ENCODE measurements at regions of chr6 and their contacts with region 1.

Region 1: DNA sequence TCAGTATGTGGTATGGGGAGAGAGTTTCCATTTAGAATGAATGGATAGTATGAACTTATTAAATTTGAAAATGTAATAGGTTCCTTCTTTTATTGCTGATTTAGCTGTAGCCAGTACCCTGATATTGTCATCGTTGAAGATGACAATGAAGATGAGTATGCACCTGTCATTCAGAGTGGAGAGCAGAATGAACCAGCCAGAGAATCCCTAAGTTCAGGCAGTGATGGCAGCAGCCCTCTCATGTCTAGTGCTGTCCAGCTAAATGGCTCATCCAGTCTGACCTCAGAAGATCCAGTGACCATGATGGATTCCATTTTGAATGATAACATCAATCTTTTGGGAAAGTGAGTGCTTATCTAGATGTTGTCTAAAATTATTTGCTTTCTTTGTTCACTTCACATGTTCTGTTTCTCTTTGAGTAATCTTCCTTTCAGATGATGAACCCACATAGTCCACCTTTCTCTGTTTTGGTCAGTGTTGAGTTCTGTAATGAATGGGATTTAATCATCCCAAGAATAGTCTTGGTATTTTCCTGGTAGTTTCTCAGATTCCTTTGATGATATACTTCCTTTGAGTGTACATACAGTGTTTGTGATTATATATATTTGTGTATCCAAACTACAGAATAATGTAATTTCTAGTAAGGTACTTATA is 23.3 kb downstream of the HSF2 start:
- DNase-seq: no peak
- H3K4me3 Mint-ChIP-seq: no peak overlapping the region
- H3K27ac Mint-ChIP-seq: no peak overlapping the region
- H3K4me1 Mint-ChIP-seq: peaks cover 7% of the 10 kb centered on the region
- H3K27me3 Mint-ChIP-seq: no peaks in the 10 kb centered on the region

Region 2: GRCh38 chr6:122393351-122393896 is 29.3 kb before region 1 on chr6:
- CTCF ChIA-PET with region 1: no interaction called
- POLR2A ChIA-PET with region 1: no interaction called
- intact Hi-C with region 1: loop called (anchors 1 kb)
- DNase-seq: peak; percentile 28
- H3K4me3 Mint-ChIP-seq: no peak overlapping the region
- H3K27ac Mint-ChIP-seq: peak overlapping the region; percentile 64
- H3K4me1 Mint-ChIP-seq: peaks cover 15% of the 10 kb centered on the region
- H3K27me3 Mint-ChIP-seq: peaks cover 3% of the 10 kb centered on the region

Region 3: DNA sequence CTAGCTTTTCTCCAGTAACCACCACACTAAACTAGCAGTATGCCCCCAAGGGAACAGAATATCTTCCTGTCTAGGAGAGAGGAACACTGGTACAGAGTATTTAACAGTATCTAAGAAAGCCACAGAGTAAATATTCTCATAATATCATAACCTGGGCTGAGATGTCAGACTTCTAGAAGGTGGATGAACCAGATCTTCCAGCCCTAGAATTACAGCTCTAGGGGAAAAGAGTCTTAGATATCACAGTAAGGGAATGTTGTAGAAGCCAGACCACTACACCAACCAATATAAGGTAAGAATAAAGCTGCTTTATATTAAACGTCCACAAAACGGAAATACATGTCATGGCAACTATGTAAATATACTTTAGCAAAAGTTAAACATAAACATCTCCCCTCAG is 36.5 kb after region 1 on chr6:
- CTCF ChIA-PET with region 1: no interaction called
- POLR2A ChIA-PET with region 1: no interaction called
- intact Hi-C with region 1: no loop called
- DNase-seq: no peak
- H3K4me3 Mint-ChIP-seq: no peak overlapping the region
- H3K27ac Mint-ChIP-seq: peak overlapping the region; percentile 59
- H3K4me1 Mint-ChIP-seq: peaks cover 73% of the 10 kb centered on the region
- H3K27me3 Mint-ChIP-seq: no peaks in the 10 kb centered on the region